ENCODE measurements at regions of chr20 and their contacts with region 1.

Region 1: DNA sequence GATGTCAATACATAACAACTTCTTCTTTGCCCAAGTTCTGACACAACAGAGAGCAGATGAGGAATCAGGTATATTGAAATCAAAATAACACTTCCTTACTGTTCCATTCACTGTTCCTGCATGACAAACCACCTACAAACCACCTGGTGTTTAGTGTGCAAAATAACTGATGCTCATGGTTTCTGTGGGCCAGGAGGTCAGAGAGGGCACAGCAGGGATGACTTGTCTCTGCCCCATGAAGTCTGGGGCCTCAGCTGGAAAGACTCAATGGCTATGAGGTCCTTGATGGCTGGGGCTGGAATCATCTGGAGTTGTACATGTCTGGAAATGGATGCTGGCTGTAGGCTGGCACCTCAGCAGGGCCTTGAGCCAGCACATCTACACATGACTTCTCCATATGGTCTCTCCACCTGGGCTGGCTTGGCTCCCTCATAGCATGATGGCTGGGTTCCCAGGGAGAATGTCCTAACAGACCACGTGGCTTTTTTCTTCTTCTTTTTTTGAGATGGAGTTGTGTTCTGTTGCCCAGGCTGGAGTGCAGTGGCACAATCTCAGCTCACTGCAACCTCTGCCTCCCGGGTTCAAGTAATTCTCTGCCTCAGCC is 7.4 kb upstream of the COX4I2 start:
- DNase-seq: no peak
- H3K4me3 ChIP-seq: no peak overlapping the region
- H3K27ac ChIP-seq: no peak overlapping the region
- H3K4me1 ChIP-seq: no peaks in the 10 kb centered on the region
- H3K27me3 ChIP-seq: no peaks in the 10 kb centered on the region
- CTCF ChIP-seq: no peak
- POLR2A ChIP-seq: no peak

Region 2: GRCh38 chr20:31560094-31560899 is 70.0 kb before region 1 on chr20:
- CTCF ChIA-PET with region 1: interaction called, 23 read pairs
- POLR2A ChIA-PET with region 1: no interaction called
- dilution Hi-C with region 1: no loop called
- intact Hi-C with region 1: no loop called
- DNase-seq: peak; percentile 79
- H3K4me3 ChIP-seq: no peak overlapping the region
- H3K27ac ChIP-seq: peak overlapping the region; percentile 100
- H3K4me1 ChIP-seq: peaks cover 35% of the 10 kb centered on the region
- H3K27me3 ChIP-seq: no peaks in the 10 kb centered on the region
- CTCF ChIP-seq: peak; percentile 90 to 97
- POLR2A ChIP-seq: peak; percentile 41

Region 3: GRCh38 chr20:31644701-31645100 is 14.4 kb after region 1 on chr20:
- CTCF ChIA-PET with region 1: interaction called, 50 read pairs
- POLR2A ChIA-PET with region 1: no interaction called
- dilution Hi-C with region 1: no loop called
- intact Hi-C with region 1: no loop called
- DNase-seq: no peak
- H3K4me3 ChIP-seq: no peak overlapping the region
- H3K27ac ChIP-seq: no peak overlapping the region
- H3K4me1 ChIP-seq: no peaks in the 10 kb centered on the region
- H3K27me3 ChIP-seq: peaks cover 0 to 7% of the 10 kb centered on the region in 2 experiments
- CTCF ChIP-seq: no peak
- POLR2A ChIP-seq: no peak

Region 4: GRCh38 chr20:31674895-31675827 is 44.9 kb after region 1 on chr20:
- CTCF ChIA-PET with region 1: interaction called, 12 read pairs
- POLR2A ChIA-PET with region 1: no interaction called
- dilution Hi-C with region 1: no loop called
- intact Hi-C with region 1: no loop called
- DNase-seq: peak; percentile 84
- H3K4me3 ChIP-seq: peak overlapping the region in 1 of 3 experiments; percentile 20
- H3K27ac ChIP-seq: peak overlapping the region; percentile 93
- H3K4me1 ChIP-seq: peaks cover 60% of the 10 kb centered on the region
- H3K27me3 ChIP-seq: no peaks in the 10 kb centered on the region
- CTCF ChIP-seq: no peak
- POLR2A ChIP-seq: peak; percentile 27

Region 5: DNA sequence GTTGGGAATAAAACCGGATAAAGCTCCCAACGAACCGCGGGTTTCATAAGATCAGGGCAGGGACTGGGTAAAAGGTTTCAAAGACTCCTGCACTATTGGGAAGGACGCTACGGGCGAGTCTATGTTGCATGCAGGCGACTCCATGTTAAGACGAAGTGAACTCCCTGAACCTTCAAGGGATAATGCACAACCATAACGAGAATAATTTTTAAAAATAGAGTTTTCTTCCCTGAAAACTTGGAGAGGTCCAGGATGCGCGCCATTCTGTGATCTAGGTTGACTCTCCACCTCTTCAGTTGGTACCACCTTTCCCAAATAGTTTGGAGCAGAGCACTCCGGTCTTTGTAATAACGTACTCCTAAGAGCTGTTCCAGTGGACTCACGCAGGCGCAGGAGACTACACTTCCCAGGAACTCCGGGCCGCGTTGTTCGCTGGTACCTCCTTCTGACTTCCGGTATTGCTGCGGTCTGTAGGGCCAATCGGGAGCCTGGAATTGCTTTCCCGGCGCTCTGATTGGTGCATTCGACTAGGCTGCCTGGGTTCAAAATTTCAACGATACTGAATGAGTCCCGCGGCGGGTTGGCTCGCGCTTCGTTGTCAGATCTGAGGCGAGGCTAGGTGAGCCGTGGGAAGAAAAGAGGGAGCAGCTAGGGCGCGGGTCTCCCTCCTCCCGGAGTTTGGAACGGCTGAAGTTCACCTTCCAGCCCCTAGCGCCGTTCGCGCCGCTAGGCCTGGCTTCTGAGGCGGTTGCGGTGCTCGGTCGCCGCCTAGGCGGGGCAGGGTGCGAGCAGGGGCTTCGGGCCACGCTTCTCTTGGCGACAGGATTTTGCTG is 108.7 kb after region 1 on chr20 and contains the start of gene TPX2:
- CTCF ChIA-PET with region 1: interaction called, 26 read pairs
- POLR2A ChIA-PET with region 1: no interaction called
- dilution Hi-C with region 1: no loop called
- intact Hi-C with region 1: no loop called
- DNase-seq: peak; percentile 98
- H3K4me3 ChIP-seq: peak within 1 kb of the TSS; percentile 78 to 99 (median 97)
- H3K27ac ChIP-seq: peak within 1 kb of the TSS; percentile 79
- H3K4me1 ChIP-seq: peaks cover 21% of the 10 kb centered on the region
- H3K27me3 ChIP-seq: no peaks in the 10 kb centered on the region
- CTCF ChIP-seq: no peak
- POLR2A ChIP-seq: peak; percentile 96
- total RNA-seq, gene TPX2: 112 and 114 TPM in 2 replicates

Region 6: DNA sequence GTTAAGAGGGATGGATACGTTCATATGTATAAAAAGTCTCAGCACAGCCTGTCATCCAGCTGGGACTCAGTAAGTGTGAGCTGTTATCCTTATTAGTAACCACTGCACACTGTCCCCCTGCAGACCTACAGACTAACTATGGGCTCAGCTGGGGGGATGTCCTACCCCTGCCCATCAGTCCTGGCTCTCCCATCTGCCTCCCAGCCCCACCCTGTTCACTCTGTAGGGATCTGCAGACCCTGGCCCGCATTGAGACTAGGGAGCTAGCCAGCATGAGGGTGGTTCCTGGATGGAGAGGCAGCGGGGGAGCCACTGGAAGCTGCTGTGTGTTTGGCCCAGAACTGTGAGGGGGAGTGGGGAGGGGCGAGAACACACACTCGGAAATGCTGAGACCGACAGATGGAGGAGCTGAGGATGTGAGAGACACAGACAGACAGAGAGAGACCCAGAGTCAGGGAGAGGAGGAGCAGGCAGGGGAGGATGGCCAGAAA is 354.7 kb after region 1 on chr20:
- CTCF ChIA-PET with region 1: no interaction called
- POLR2A ChIA-PET with region 1: no interaction called
- dilution Hi-C with region 1: no loop called
- intact Hi-C with region 1: no loop called
- DNase-seq: no peak
- H3K4me3 ChIP-seq: no peak overlapping the region
- H3K27ac ChIP-seq: no peak overlapping the region
- H3K4me1 ChIP-seq: peaks cover 5% of the 10 kb centered on the region
- H3K27me3 ChIP-seq: peaks cover 3 to 4% of the 10 kb centered on the region in 2 experiments
- CTCF ChIP-seq: no peak
- POLR2A ChIP-seq: no peak